CD8-positive, alpha-beta memory T cell (primary cell): ENCODE measurements at regions of chr1 and their contacts with region 1.

Region 1: DNA sequence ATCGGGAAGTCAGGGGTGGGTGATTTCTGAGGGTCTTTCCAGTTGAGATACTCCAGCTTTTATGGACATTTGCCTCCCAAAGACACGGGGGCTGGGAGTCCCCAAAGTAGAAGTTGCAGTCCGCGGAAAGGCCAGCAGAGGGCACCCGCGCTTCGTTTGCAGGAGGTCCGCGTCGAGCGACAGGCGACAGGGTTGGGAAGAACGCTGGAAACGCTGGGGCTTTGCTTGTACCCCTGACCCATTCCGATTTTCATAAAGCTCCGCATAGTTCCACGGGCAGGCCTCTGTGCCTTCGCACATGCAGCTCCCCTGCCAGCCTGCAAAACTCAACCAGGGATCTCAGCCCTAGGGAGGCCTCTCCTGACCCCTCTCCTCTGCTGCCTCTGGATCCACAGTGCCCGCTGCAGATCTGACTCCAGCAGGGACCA is 44.2 kb upstream of the LAPTM5 start:
- DNase-seq: peak; percentile 58 to 83 (median 72)
- H3K4me3 ChIP-seq: no peak overlapping the region
- H3K4me3 Mint-ChIP-seq: no peak overlapping the region
- H3K27ac ChIP-seq: no peak overlapping the region
- H3K27ac Mint-ChIP-seq: peak overlapping the region in 2 of 8 donors; percentile 9 to 39
- H3K4me1 ChIP-seq: no peaks in the 10 kb centered on the region
- H3K4me1 Mint-ChIP-seq: peaks cover 4 to 8% (median 5%) of the 10 kb centered on the region in 3 donors
- H3K27me3 ChIP-seq: peaks cover 12% of the 10 kb centered on the region
- H3K27me3 Mint-ChIP-seq: peaks cover 10 to 34% of the 10 kb centered on the region in 2 donors

Region 2: GRCh38 chr1:30779294-30780071 is 22.3 kb before region 1 on chr1:
- CTCF ChIA-PET with region 1: interaction called, 15 read pairs
- POLR2A ChIA-PET with region 1: interaction called, 4 read pairs
- DNase-seq: peak; percentile 82 to 93 (median 91)
- H3K4me3 ChIP-seq: peak overlapping the region; percentile 33
- H3K4me3 Mint-ChIP-seq: peak overlapping the region in 5 of 7 donors; percentile 19 to 49 (median 23)
- H3K27ac ChIP-seq: peak overlapping the region; percentile 78
- H3K27ac Mint-ChIP-seq: peak overlapping the region in 7 of 8 donors; percentile 3 to 81 (median 36)
- H3K4me1 ChIP-seq: peaks cover 19% of the 10 kb centered on the region
- H3K4me1 Mint-ChIP-seq: peaks cover 15 to 29% (median 18%) of the 10 kb centered on the region in 3 donors
- H3K27me3 ChIP-seq: no peaks in the 10 kb centered on the region
- H3K27me3 Mint-ChIP-seq: no peaks in the 10 kb centered on the region

Region 3: GRCh38 chr1:30911046-30911954 is 109.5 kb after region 1 on chr1:
- CTCF ChIA-PET with region 1: interaction called, 45 read pairs
- POLR2A ChIA-PET with region 1: no interaction called
- DNase-seq: peak in 4 of 5 donors; percentile 19 to 64 (median 23)
- H3K4me3 ChIP-seq: no peak overlapping the region
- H3K4me3 Mint-ChIP-seq: peak overlapping the region in 3 of 7 donors; percentile 11 to 75 (median 59)
- H3K27ac ChIP-seq: no peak overlapping the region
- H3K27ac Mint-ChIP-seq: peak overlapping the region in 3 of 8 donors; percentile 9 to 38 (median 29)
- H3K4me1 ChIP-seq: peaks cover 15% of the 10 kb centered on the region
- H3K4me1 Mint-ChIP-seq: peaks cover 14 to 19% (median 15%) of the 10 kb centered on the region in 3 donors
- H3K27me3 ChIP-seq: peaks cover 15% of the 10 kb centered on the region
- H3K27me3 Mint-ChIP-seq: peaks cover 20 to 30% of the 10 kb centered on the region in 2 donors

Region 4: DNA sequence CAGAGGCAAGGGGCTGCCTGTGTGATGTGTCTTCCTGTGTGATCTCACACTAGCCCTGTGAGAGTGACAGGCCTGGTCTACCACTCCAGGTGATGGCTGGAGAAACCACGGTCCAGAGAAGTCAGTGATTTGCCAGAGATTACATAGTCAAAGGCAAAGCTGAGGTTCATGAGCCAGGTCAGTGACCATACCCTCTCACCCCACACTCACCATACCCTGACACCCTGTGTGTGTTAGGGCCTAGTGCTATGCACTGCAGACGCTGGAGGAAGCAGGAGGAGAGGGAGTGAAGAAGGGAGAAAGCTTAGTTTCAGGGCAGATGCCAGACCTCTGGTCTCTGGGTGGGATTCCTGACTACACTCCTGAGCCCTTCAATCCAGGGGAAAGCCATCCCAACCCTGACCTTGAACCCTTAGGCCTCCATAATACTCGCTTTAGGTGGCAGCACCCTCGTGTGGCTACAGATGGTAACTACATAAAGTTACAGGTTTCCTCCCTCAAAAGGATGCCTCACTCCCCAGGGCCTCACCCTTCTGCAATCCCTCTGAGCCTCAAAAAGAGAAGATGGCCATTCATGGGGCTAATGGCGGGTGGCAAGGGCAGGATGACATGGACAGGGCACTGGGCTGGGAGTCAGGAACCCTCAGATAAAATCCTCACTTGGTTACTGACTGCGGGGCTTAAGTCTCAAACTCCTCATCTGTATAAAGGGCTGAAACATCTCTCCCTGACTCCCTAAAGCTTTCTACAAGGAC is 127.5 kb after region 1 on chr1:
- CTCF ChIA-PET with region 1: interaction called, 15 read pairs
- POLR2A ChIA-PET with region 1: no interaction called
- DNase-seq: peak in 4 of 5 donors; percentile 18 to 36 (median 26)
- H3K4me3 ChIP-seq: no peak overlapping the region
- H3K4me3 Mint-ChIP-seq: peak overlapping the region in 1 of 7 donors; percentile 17
- H3K27ac ChIP-seq: no peak overlapping the region
- H3K27ac Mint-ChIP-seq: peak overlapping the region in 7 of 8 donors; percentile 29 to 87 (median 54)
- H3K4me1 ChIP-seq: peaks cover 5% of the 10 kb centered on the region
- H3K4me1 Mint-ChIP-seq: peaks cover 10 to 12% (median 12%) of the 10 kb centered on the region in 3 donors
- H3K27me3 ChIP-seq: no peaks in the 10 kb centered on the region
- H3K27me3 Mint-ChIP-seq: no peaks in the 10 kb centered on the region